ENCODE measurements at regions of chr9 and their contacts with region 1.

Region 1: DNA sequence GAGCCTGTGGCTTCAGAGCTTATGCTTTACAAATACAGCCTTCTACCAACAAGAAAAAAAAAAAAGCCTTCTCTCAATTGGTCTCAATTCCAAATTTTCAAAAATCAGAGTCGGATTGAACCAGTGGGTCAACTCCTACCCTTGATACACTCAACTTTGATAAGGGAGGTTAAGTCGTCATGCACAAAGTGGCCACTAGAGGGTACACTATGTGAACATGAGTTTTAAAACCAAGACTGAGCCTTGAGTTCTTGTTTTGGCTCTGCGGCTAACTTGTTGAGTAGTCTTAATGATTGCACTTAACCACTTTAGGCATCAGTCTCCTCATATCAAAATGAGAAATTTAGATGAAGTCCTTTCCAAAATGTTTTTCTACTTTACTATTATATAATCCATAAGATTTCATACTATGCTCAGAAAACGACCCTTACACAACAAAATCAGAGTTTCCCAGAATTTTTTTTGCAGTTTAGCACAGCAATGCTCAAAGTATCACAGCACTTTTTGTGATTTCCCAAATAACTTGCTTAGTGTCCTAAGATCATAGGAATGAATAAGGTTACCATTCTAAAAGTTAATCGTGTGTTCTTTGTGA is 92.9 kb upstream of the MTAP start:
- DNase-seq: peak in 1 of 2 donors; percentile 44
- H3K4me3 ChIP-seq: no peak overlapping the region
- H3K27ac ChIP-seq: no peak overlapping the region
- H3K4me1 ChIP-seq: no peaks in the 10 kb centered on the region
- H3K27me3 ChIP-seq: no peaks in the 10 kb centered on the region
- CTCF ChIP-seq: peak; percentile 60 to 73 (median 66)
- POLR2A ChIP-seq: no peak

Region 2: GRCh38 chr9:21696411-21696873 is 13.1 kb before region 1 on chr9:
- intact Hi-C with region 1: loop called (anchors 1 kb)
- DNase-seq: no peak
- H3K4me3 ChIP-seq: no peak overlapping the region
- H3K27ac ChIP-seq: no peak overlapping the region
- H3K4me1 ChIP-seq: no peaks in the 10 kb centered on the region
- H3K27me3 ChIP-seq: no peaks in the 10 kb centered on the region
- CTCF ChIP-seq: no peak
- POLR2A ChIP-seq: no peak

Measured in breast epithelium (tissue), 4 donors.